ENCODE measurements at regions of chrX and their contacts with region 1.

Region 1: DNA sequence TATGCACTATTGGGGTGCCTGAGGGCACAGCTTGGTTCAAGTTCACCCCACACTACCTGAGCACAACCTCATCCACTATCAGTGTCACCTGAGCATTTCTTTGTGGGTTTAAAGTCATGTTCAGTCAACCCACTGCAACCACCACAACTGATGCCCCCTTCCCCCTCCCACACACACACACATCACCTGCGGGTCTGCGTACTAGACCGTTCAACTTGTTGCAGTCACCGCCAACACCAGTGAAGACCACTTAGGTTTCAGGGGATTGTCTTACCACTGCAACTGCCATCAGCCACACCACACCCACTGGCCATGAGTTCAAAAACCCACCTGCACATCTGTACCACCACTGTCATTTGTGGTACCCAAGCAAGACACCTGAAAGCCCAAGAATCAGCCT is 355.0 kb downstream of the SH3BGRL start:
- DNase-seq: no peak
- H3K4me3 ChIP-seq: no peak overlapping the region
- H3K27ac ChIP-seq: no peak overlapping the region
- H3K4me1 ChIP-seq: no peaks in the 10 kb centered on the region
- H3K27me3 ChIP-seq: no peaks in the 10 kb centered on the region
- CTCF ChIP-seq: no peak
- EP300 ChIP-seq: no peak
- POLR2A ChIP-seq: no peak

Region 2: GRCh38 chrX:80489166-80489565 is 1067.7 kb before region 1 on chrX:
- in situ Hi-C with region 1: no loop called
- intact Hi-C with region 1: no loop called
- DNase-seq: no peak
- H3K4me3 ChIP-seq: no peak overlapping the region
- H3K27ac ChIP-seq: no peak overlapping the region
- H3K4me1 ChIP-seq: no peaks in the 10 kb centered on the region
- H3K27me3 ChIP-seq: no peaks in the 10 kb centered on the region
- CTCF ChIP-seq: no peak
- EP300 ChIP-seq: no peak
- POLR2A ChIP-seq: no peak

Region 3: DNA sequence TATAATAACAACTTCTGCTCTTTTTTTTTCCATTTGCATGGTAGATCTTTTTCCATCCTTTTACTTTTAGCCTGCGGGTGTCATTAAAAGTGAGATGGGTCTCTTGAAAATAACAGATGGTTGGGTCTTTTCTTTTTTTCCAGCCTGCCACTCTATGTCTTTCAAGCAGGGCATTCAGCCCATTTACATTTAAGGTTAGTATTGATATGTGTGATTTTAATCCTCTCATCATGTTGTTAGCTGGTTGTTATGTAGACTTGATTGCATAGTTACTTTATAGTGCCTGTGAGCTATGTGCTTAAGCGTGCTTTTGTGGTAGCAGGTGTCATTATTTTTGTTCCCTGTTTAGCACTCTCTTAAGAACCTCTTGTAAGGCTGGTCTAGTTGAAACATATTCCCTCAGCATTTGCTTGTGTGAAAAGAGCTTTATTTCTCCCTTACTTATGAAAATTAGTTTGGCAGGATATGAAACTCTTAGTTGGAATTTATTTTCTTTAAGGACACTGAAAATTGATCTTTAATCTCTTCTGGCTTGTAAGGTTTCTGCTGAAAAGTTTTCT is 28.9 kb before region 1 on chrX:
- in situ Hi-C with region 1: no loop called
- intact Hi-C with region 1: loop called (anchors 1 kb)
- DNase-seq: no peak
- H3K4me3 ChIP-seq: no peak overlapping the region
- H3K27ac ChIP-seq: no peak overlapping the region
- H3K4me1 ChIP-seq: no peaks in the 10 kb centered on the region
- H3K27me3 ChIP-seq: no peaks in the 10 kb centered on the region
- CTCF ChIP-seq: no peak
- EP300 ChIP-seq: no peak
- POLR2A ChIP-seq: no peak

Measured in transverse colon (tissue), 4 donors.